Natural killer cell (primary cell): ENCODE measurements at regions of chr13 and their contacts with region 1.

Region 1: GRCh38 chr13:99033814-99034213 is 56.0 kb upstream of the DOCK9 start:
- DNase-seq: peak in 1 of 2 donors; percentile 55
- ATAC-seq: no peak
- H3K4me3 ChIP-seq: no peak overlapping the region
- H3K4me3 Mint-ChIP-seq: no peak overlapping the region
- H3K27ac ChIP-seq: no peak overlapping the region
- H3K27ac Mint-ChIP-seq: peak overlapping the region in 1 of 2 donors; percentile 33
- H3K4me1 ChIP-seq: peaks cover 3% of the 10 kb centered on the region
- H3K4me1 Mint-ChIP-seq: peaks cover 4% of the 10 kb centered on the region in 2 donors
- H3K27me3 ChIP-seq: no peaks in the 10 kb centered on the region
- H3K27me3 Mint-ChIP-seq: peaks cover 6 to 16% of the 10 kb centered on the region in 2 donors
- CTCF ChIP-seq: no peak

Region 2: GRCh38 chr13:98977568-98978265 is 56.1 kb before region 1 on chr13 and contains the start of gene DOCK9:
- intact Hi-C with region 1: no loop called
- DNase-seq: no peak
- ATAC-seq: no peak
- H3K4me3 ChIP-seq: no peak within 1 kb of the TSS
- H3K4me3 Mint-ChIP-seq: no peak within 1 kb of the TSS
- H3K27ac ChIP-seq: no peak within 1 kb of the TSS
- H3K27ac Mint-ChIP-seq: no peak within 1 kb of the TSS
- H3K4me1 ChIP-seq: peaks cover 6% of the 10 kb centered on the region
- H3K4me1 Mint-ChIP-seq: peaks cover 31 to 56% of the 10 kb centered on the region in 2 donors
- H3K27me3 ChIP-seq: no peaks in the 10 kb centered on the region
- H3K27me3 Mint-ChIP-seq: peaks cover 0 to 7% of the 10 kb centered on the region in 2 donors
- CTCF ChIP-seq: no peak
- total RNA-seq, gene DOCK9: 31.5 to 42.5 (median 40.9) TPM

Region 3: DNA sequence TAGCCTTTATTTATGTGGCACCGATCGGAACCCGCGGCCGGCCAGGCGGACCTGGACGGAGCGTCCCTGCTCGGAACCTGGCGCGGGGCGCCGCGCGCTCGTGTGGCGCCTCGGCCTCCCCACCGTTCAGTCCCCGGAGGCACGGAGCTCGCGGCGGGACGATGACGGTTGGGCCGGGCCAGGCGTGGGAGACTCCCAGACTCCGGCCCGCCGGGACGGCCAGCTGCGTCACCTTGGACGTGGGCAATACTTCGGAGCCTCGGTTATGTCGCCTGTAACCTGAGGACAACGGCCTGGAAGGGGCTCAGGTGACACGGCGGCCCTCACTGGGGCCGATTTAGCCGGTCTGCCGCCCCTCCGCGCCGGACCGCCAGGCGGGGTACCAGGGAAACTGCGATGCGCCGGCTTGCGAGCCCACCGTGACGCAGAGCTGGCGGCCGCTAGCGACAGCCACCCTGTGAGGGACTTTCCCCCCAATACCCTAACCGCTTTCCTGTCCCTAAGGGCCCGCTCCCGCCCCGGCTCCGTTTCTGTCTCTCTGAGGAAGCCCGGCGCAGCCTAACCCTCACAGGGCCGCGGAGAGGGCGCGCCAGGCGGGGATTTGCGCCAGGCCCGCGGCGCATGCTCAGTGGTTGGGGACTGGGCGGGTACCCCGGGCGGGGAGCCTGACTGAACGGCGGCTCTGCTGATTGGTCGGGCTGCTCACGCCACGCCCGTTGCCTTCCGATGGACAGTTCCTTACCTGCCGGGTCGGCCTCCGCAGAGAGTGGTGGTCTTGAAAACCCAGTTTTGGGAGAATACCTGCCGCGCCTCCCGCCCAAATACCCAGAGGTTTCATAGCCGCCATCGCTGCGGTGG is 53.5 kb after region 1 on chr13:
- intact Hi-C with region 1: loop called (anchors 5 kb)
- DNase-seq: peak; percentile 86 to 96
- ATAC-seq: peak; percentile 68 to 84 (median 76)
- H3K4me3 ChIP-seq: peak overlapping the region; percentile 66
- H3K4me3 Mint-ChIP-seq: peak overlapping the region; percentile 98
- H3K27ac ChIP-seq: peak overlapping the region; percentile 87
- H3K27ac Mint-ChIP-seq: peak overlapping the region; percentile 95 to 100
- H3K4me1 ChIP-seq: peaks cover 28% of the 10 kb centered on the region
- H3K4me1 Mint-ChIP-seq: peaks cover 26 to 28% of the 10 kb centered on the region in 2 donors
- H3K27me3 ChIP-seq: no peaks in the 10 kb centered on the region
- H3K27me3 Mint-ChIP-seq: peaks cover 8 to 13% of the 10 kb centered on the region in 2 donors
- CTCF ChIP-seq: peak; percentile 38

Region 4: GRCh38 chr13:99133230-99133629 is 99.4 kb after region 1 on chr13:
- intact Hi-C with region 1: loop called (anchors 10 kb)
- DNase-seq: no peak
- ATAC-seq: no peak
- H3K4me3 ChIP-seq: no peak overlapping the region
- H3K4me3 Mint-ChIP-seq: no peak overlapping the region
- H3K27ac ChIP-seq: no peak overlapping the region
- H3K27ac Mint-ChIP-seq: no peak overlapping the region
- H3K4me1 ChIP-seq: no peaks in the 10 kb centered on the region
- H3K4me1 Mint-ChIP-seq: no peaks in the 10 kb centered on the region
- H3K27me3 ChIP-seq: no peaks in the 10 kb centered on the region
- H3K27me3 Mint-ChIP-seq: peaks cover 15 to 23% of the 10 kb centered on the region in 2 donors
- CTCF ChIP-seq: no peak

Region 5: DNA sequence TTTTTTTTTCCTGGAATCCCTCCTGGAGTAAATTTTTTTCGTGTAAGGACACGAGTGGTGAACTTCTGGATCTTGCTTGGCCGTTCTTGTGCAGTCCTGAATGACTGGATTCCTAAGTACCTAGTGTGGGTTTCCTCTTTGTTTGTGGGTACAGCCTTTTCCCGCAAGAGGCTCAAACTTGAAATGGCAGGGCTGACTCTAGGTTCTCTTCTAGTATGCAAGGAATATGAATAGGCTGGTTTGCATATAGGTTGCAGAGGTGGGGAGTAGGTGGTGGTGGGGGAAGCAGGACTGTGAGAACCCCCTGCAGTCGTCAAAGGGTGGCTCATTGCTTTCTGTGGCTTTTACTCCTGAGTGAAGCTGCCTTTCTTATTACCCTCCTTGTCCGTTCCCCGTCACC is 180.4 kb after region 1 on chr13:
- intact Hi-C with region 1: no loop called
- DNase-seq: peak in 1 of 2 donors; percentile 60
- ATAC-seq: no peak
- H3K4me3 ChIP-seq: no peak overlapping the region
- H3K4me3 Mint-ChIP-seq: peak overlapping the region; percentile 81
- H3K27ac ChIP-seq: peak overlapping the region; percentile 68
- H3K27ac Mint-ChIP-seq: peak overlapping the region; percentile 83 to 88
- H3K4me1 ChIP-seq: peaks cover 50% of the 10 kb centered on the region
- H3K4me1 Mint-ChIP-seq: peaks cover 54 to 63% of the 10 kb centered on the region in 2 donors
- H3K27me3 ChIP-seq: no peaks in the 10 kb centered on the region
- H3K27me3 Mint-ChIP-seq: no peaks in the 10 kb centered on the region
- CTCF ChIP-seq: no peak